ENCODE measurements at regions of chr7 and their contacts with region 1.

Region 1: DNA sequence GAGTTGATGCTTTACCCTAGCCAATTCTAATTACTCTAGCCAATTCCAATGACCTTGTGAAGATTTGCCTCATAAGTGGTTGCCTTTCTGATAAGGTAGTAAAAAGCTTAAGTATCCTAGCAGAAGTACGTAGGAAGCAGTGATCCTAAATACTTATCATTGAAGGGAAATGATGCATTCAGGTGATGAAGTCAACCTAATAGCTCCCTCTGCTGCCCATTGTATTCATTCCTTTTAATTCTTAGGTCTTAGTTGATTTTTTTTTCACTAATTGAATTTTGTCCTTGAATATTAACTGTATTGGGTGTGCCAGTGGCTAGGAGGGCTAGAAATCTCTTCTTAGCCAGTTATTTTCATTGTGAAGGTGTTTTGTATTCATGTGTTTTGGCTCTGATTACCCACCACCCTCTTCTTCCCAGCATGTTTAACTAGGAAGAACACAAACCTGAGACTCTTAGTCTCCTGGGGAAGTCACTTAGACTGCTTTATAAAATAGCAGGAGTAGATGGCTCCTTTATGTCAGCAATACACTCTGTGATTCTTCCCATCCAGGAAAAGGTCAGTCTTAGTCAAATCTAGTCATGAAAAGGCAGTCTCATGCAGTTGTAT is 46.3 kb downstream of the PLEKHA8 start:
- DNase-seq: peak in 4 of 5 donors; percentile 4 to 8 (median 8)
- H3K4me3 ChIP-seq: no peak overlapping the region
- H3K4me3 Mint-ChIP-seq: no peak overlapping the region
- H3K27ac ChIP-seq: no peak overlapping the region
- H3K27ac Mint-ChIP-seq: peak overlapping the region in 1 of 7 donors; percentile 25
- H3K4me1 ChIP-seq: no peaks in the 10 kb centered on the region
- H3K4me1 Mint-ChIP-seq: peaks cover 0 to 2% (median 0%) of the 10 kb centered on the region in 4 donors
- H3K27me3 ChIP-seq: no peaks in the 10 kb centered on the region
- H3K27me3 Mint-ChIP-seq: no peaks in the 10 kb centered on the region

Region 2: GRCh38 chr7:29748286-29749108 is 326.0 kb before region 1 on chr7:
- CTCF ChIA-PET with region 1: no interaction called
- POLR2A ChIA-PET with region 1: no interaction called
- intact Hi-C with region 1: loop called (anchors 2 kb)
- DNase-seq: no peak
- H3K4me3 ChIP-seq: no peak overlapping the region
- H3K4me3 Mint-ChIP-seq: no peak overlapping the region
- H3K27ac ChIP-seq: no peak overlapping the region
- H3K27ac Mint-ChIP-seq: no peak overlapping the region
- H3K4me1 ChIP-seq: no peaks in the 10 kb centered on the region
- H3K4me1 Mint-ChIP-seq: no peaks in the 10 kb centered on the region
- H3K27me3 ChIP-seq: no peaks in the 10 kb centered on the region
- H3K27me3 Mint-ChIP-seq: peaks cover 0 to 6% of the 10 kb centered on the region in 2 donors

Region 3: DNA sequence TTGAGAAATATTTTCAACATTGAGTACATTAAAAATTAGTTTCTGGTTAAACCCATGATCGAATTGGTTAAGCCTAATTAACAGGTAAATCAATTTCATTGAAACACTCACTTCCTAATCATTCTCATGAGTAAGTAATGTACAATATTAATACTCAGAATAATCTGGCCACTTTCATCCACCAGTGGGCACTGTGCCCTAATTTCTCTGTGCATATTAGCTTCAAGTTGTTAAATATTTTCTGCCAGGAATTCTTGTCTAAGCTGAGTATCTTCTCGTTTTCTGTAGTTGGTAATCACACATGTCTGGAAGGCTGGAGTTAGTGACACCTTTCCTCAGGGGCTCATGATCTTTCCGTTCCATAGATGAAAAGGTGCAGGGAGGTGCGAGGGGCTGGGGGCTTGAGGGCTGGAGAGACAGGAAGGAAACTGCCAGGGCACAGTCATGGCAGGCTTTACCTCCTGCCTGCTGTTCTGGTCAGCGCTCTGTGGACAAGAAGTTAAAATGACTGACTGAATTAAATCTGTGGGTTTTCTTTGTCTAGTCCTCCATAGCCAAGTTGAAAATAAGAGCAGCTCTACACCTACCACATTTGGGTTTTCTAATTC is 196.3 kb before region 1 on chr7:
- CTCF ChIA-PET with region 1: interaction called, 9 read pairs
- POLR2A ChIA-PET with region 1: no interaction called
- intact Hi-C with region 1: loop called (anchors 1 kb)
- DNase-seq: peak in 4 of 5 donors; percentile 6 to 12 (median 10)
- H3K4me3 ChIP-seq: no peak overlapping the region
- H3K4me3 Mint-ChIP-seq: no peak overlapping the region
- H3K27ac ChIP-seq: no peak overlapping the region
- H3K27ac Mint-ChIP-seq: no peak overlapping the region
- H3K4me1 ChIP-seq: no peaks in the 10 kb centered on the region
- H3K4me1 Mint-ChIP-seq: peaks cover 3 to 5% (median 3%) of the 10 kb centered on the region in 4 donors
- H3K27me3 ChIP-seq: no peaks in the 10 kb centered on the region
- H3K27me3 Mint-ChIP-seq: peaks cover 9 to 18% of the 10 kb centered on the region in 2 donors

Region 4: GRCh38 chr7:30406664-30407425 is 332.3 kb after region 1 on chr7:
- CTCF ChIA-PET with region 1: no interaction called
- POLR2A ChIA-PET with region 1: no interaction called
- intact Hi-C with region 1: loop called (anchors 5 kb)
- DNase-seq: no peak
- H3K4me3 ChIP-seq: no peak overlapping the region
- H3K4me3 Mint-ChIP-seq: no peak overlapping the region
- H3K27ac ChIP-seq: no peak overlapping the region
- H3K27ac Mint-ChIP-seq: no peak overlapping the region
- H3K4me1 ChIP-seq: no peaks in the 10 kb centered on the region
- H3K4me1 Mint-ChIP-seq: peaks cover 0 to 3% (median 0%) of the 10 kb centered on the region in 4 donors
- H3K27me3 ChIP-seq: no peaks in the 10 kb centered on the region
- H3K27me3 Mint-ChIP-seq: no peaks in the 10 kb centered on the region

Measured in CD4-positive, alpha-beta memory T cell (primary cell).